PC-9 (cell line): ENCODE measurements at regions of chr2 and their contacts with region 1.

Region 1: DNA sequence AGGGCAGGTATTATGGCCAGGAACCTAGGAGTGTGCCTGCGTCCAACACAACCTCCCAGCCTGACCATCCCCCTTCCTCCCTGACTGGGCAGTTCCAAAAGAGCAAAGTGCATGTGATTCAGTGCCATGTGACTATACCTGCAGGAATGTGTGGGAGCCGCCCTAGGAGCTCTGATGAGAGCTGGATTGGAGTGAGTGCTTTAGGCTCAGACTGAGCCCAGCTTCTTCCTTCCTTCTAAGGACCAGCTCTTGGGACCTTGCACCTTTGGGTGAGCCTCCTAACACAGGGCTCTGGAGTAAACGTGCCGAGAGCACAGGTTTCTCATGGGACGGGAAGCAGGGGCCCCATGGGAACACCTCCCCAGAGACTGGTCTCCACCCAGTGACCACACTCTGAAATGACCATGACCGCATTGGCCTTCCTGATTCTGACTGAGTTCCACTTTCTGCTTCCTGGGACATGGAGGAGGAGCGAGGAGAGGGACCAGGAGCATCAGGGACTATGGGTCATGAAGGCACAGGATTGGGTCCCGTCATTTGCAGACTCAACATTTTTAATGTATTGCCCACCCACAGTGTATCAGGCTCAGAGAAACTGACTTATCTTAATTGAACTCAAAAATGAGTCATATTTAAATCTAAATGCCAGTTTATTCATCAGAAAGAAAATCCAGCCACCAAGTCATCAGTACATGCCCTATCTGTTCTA is 87.8 kb upstream of the BCL2L11 start:
- DNase-seq: peak; percentile 69 to 88
- H3K4me3 ChIP-seq: peak overlapping the region; percentile 24; the same call in 1 of the 2 replicates
- H3K27ac ChIP-seq: peak overlapping the region; percentile 94
- H3K4me1 ChIP-seq: peaks cover 41% of the 10 kb centered on the region
- H3K27me3 ChIP-seq: no peaks in the 10 kb centered on the region
- CTCF ChIP-seq: no peak; the same call in 1 of the 2 replicates

Region 2: GRCh38 chr2:111113838-111114237 is 81.0 kb after region 1 on chr2:
- CTCF ChIA-PET with region 1: no interaction called
- POLR2A ChIA-PET with region 1: no interaction called
- intact Hi-C with region 1: no loop called
- DNase-seq: no peak
- H3K4me3 ChIP-seq: no peak overlapping the region
- H3K27ac ChIP-seq: no peak overlapping the region
- H3K4me1 ChIP-seq: peaks cover 6% of the 10 kb centered on the region
- H3K27me3 ChIP-seq: no peaks in the 10 kb centered on the region
- CTCF ChIP-seq: no peak

Region 3: GRCh38 chr2:111168528-111169239 is 135.8 kb after region 1 on chr2:
- CTCF ChIA-PET with region 1: no interaction called
- POLR2A ChIA-PET with region 1: interaction called, 11 read pairs
- intact Hi-C with region 1: no loop called
- DNase-seq: peak; percentile 53 to 64
- H3K4me3 ChIP-seq: no peak overlapping the region
- H3K27ac ChIP-seq: peak overlapping the region; percentile 27; the same call in 1 of the 2 replicates
- H3K4me1 ChIP-seq: peaks cover 33% of the 10 kb centered on the region
- H3K27me3 ChIP-seq: no peaks in the 10 kb centered on the region
- CTCF ChIP-seq: no peak